Activated CD4-positive, alpha-beta T cell treated with anti-CD3 and anti-CD28 coated beads, Interleukin-2, amount 10 ng/mL, durations not matched to agents 24 days and 14 days (primary cell): ENCODE measurements at regions of chr14 and their contacts with region 1.

Region 1: DNA sequence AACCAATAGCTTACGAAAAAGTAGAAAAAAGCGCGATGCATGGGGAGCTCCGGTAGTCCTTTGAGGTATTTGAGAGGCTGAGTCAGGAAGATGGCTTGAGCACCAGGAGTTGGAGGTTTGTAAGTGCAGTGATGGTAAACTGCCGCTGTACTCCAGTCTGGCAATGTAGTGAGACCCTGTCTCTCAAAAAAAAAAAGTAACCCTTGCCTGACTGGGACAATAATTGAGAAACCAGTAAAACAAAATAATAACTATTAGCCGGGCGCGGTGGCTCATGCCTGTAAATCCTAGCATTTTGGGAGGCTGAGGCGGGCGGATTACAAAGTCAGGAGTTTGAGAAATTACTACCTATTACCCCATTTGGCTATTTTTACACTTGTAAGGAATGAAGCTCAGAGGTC is 632 bp upstream of the ACOT2 start:
- DNase-seq: peak; percentile 65
- H3K4me3 Mint-ChIP-seq: peak overlapping the region; percentile 93
- H3K27ac Mint-ChIP-seq: peak overlapping the region; percentile 98
- H3K4me1 Mint-ChIP-seq: peaks cover 31% of the 10 kb centered on the region
- H3K27me3 Mint-ChIP-seq: no peaks in the 10 kb centered on the region

Region 2: DNA sequence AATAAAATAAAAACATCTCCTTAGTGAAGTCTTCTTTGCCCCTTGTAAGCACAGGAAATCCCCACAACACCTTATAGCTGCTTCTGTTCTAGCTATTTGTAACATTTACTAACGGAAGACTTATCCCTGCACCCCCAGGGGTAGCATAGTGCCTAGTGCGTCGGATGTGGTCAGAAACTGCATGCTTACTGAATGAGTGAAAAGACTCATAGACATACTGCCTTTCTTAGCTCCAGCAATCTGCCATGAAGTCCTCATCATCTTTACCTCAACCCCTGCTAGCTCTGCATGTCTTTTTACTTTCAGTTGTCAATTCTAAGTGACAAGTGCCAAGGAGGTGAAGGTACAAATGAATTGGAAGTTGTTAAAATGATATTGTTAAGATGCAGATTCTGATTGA is 64.7 kb before region 1 on chr14:
- intact Hi-C with region 1: loop called (anchors 2 kb)
- DNase-seq: no peak
- H3K4me3 Mint-ChIP-seq: no peak overlapping the region
- H3K27ac Mint-ChIP-seq: no peak overlapping the region
- H3K4me1 Mint-ChIP-seq: no peaks in the 10 kb centered on the region
- H3K27me3 Mint-ChIP-seq: no peaks in the 10 kb centered on the region

Region 3: GRCh38 chr14:73553845-73554244 is 14.5 kb before region 1 on chr14:
- intact Hi-C with region 1: no loop called
- DNase-seq: no peak
- H3K4me3 Mint-ChIP-seq: no peak overlapping the region
- H3K27ac Mint-ChIP-seq: no peak overlapping the region
- H3K4me1 Mint-ChIP-seq: no peaks in the 10 kb centered on the region
- H3K27me3 Mint-ChIP-seq: peaks cover 2% of the 10 kb centered on the region

Region 4: GRCh38 chr14:73613046-73613383 is 44.6 kb after region 1 on chr14:
- intact Hi-C with region 1: loop called (anchors 10 kb)
- DNase-seq: no peak
- H3K4me3 Mint-ChIP-seq: peak overlapping the region; percentile 81
- H3K27ac Mint-ChIP-seq: no peak overlapping the region
- H3K4me1 Mint-ChIP-seq: peaks cover 8% of the 10 kb centered on the region
- H3K27me3 Mint-ChIP-seq: peaks cover 8% of the 10 kb centered on the region